ENCODE measurements at regions of chr3 and their contacts with region 1.

Region 1: DNA sequence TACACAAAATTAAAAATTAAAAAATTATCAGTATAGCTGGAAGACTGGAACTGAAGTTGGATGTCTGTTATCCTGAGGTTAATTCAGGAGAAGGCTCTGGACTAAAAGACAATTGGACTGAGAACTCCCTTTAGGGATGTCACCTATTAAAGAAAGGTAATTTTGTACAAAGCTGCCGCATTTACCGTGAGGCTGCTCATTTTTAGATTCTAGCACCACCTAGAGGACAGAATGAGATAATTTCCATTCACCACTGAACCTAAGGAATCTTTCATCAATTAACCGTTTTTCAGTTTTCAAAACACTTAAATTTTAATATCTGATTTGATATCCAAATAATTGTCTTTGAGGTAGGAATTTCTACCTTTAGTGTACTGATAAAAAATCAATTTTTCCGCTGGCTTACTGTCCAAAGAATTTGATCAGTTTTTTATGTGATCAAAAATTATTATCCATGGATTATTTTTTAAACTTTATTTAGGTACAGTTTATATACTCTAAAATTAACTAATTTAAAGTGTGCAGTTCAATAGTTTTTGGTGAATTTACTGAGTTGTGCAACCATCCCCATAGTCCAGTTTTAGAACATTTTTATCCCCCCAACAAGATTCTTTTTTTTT is 106.7 kb upstream of the TNIK start:
- DNase-seq: no peak
- ATAC-seq: peak in 1 of 2 donors; percentile 44
- H3K4me3 ChIP-seq: no peak overlapping the region
- H3K27ac ChIP-seq: no peak overlapping the region
- H3K4me1 ChIP-seq: no peaks in the 10 kb centered on the region
- H3K27me3 ChIP-seq: no peaks in the 10 kb centered on the region

Region 2: DNA sequence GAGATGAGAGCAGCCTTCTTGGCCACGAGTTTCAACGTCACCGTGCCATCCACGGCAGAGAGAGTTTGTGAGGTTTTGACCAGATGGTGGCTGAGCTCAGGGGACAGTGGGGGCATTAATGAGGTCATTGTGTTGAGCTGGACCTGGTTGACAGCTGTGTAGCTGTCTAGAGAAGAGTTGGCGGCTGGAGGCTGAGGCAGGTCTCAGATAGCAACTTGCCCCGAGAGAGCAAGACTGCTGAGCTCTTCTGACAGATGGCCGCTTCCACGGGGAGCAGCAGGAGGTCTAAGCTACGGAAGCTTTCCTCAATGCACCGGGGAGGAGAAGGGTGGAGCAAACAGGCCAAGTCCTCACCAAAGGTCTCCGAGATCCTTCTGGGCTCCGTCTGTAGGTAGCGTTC is 613.7 kb before region 1 on chr3:
- intact Hi-C with region 1: loop called in 1 of 4 experiments (anchors 5 kb)
- DNase-seq: peak in 1 of 3 donors; percentile 20
- ATAC-seq: no peak
- H3K4me3 ChIP-seq: no peak overlapping the region
- H3K27ac ChIP-seq: no peak overlapping the region
- H3K4me1 ChIP-seq: no peaks in the 10 kb centered on the region
- H3K27me3 ChIP-seq: no peaks in the 10 kb centered on the region

Region 3: DNA sequence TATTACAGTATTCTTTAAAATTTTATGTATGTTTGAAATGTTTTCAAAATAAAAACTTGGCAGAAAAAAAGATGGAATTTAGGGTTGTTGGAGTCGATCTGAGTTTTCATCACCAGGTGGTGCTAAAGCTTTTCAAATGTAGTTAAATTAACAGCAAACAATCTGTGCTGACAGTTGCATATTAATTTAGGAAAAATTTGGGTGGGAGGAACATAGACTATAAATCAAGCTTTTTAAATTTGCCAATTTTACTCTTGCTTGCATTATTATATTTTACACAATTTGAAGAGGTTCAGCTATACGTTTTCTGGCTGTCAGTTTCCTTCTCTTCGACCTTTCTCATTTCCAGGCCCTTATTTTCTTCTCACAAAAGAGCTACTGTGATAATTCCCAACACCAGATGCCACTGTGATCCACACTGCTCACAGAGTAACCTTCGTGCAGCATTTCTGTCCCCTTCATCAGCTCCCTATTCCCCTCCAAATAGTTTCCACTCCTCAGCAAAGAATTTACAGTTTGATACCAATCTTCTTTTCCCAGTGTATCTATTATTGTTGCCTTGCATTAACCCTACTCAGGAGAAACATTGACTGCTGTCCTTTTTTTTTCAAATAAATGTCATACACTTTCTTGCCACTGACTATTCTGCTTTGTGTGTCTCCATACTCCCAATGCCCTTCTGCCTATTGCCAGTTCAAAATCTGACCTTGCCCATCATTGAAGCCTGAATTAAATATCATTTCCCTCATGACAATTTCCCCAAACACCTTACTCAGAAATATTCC is 605.1 kb before region 1 on chr3:
- intact Hi-C with region 1: loop called in 3 of 4 experiments (anchors 5 kb)
- DNase-seq: no peak
- ATAC-seq: no peak
- H3K4me3 ChIP-seq: no peak overlapping the region
- H3K27ac ChIP-seq: no peak overlapping the region
- H3K4me1 ChIP-seq: no peaks in the 10 kb centered on the region
- H3K27me3 ChIP-seq: no peaks in the 10 kb centered on the region

Region 4: DNA sequence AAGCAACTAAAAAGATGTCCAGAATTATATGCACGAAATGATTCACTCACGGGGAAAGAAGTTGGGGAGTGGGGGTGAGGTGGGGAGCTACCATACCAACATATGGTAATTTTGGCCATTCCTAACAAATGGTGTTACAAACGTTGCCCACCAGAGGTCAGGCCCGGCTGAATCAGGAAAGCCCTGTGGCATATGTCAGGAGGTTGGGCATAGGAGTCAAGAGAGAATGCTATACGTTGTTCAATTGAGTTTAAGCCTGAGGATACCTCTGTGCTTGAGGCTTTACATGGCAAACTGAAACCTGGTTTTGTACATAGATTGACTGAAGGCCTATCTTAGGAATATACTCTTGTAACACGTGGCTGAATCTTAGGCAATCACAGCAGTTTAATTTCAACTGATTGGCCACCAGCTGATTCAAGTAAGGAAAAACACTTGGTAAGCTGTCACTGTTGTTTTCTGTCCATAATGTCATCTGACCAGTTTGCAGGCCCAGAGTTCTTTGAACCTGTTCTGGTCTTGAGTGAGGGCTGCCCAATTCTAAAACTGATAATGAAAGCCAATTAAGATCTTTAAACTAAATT is 517.0 kb before region 1 on chr3:
- intact Hi-C with region 1: loop called (anchors 5 to 10 kb)
- DNase-seq: peak; percentile 38 to 66 (median 54)
- ATAC-seq: peak; percentile 71 to 73
- H3K4me3 ChIP-seq: no peak overlapping the region
- H3K27ac ChIP-seq: no peak overlapping the region
- H3K4me1 ChIP-seq: no peaks in the 10 kb centered on the region
- H3K27me3 ChIP-seq: no peaks in the 10 kb centered on the region

Region 5: DNA sequence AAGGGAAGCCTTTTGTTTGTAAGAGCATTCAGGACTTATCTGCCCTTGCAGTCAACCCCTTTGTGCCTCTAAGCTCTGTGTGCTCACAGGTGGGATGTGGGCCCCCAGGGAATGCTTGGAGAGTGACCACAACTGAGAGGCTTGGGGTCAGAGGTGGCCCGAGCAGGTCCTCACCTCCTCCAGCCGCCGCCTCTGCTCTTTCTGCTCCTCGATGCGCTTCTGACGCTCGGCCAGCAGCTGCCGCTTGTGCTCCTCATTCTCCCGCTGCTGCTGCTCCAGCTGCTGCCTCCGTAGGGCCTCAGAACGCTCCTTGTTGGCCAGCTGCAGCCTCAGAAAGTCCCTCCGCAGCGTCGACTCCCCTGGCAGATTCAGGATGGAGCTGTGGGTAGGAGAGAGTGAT is 409.6 kb before region 1 on chr3:
- intact Hi-C with region 1: loop called in 1 of 4 experiments (anchors 10 kb)
- DNase-seq: peak; percentile 40 to 81 (median 73)
- ATAC-seq: peak; percentile 51 to 54
- H3K4me3 ChIP-seq: no peak overlapping the region
- H3K27ac ChIP-seq: no peak overlapping the region
- H3K4me1 ChIP-seq: no peaks in the 10 kb centered on the region
- H3K27me3 ChIP-seq: no peaks in the 10 kb centered on the region

Region 6: DNA sequence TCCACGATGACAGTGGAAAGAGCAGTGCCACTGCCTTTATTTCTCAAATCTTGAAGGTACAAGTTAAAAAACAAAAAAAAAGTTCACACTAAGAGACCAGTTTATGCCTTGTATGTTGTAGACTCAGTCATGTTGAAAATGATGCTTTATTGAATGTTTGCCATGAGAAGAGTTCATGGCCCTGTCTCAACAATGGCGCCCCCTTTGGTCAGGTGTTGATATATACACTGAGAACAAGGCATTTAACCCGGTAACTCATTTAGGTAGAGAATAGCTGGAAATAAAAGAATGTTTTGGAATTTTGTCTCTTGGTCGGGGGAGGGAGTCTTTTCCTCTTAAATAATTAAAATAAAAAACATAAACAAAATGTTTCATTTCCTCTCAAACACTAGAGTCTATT is 394.8 kb before region 1 on chr3:
- intact Hi-C with region 1: loop called in 1 of 4 experiments (anchors 10 kb)
- DNase-seq: no peak
- ATAC-seq: no peak
- H3K4me3 ChIP-seq: no peak overlapping the region
- H3K27ac ChIP-seq: no peak overlapping the region
- H3K4me1 ChIP-seq: peaks cover 7% of the 10 kb centered on the region
- H3K27me3 ChIP-seq: no peaks in the 10 kb centered on the region

Region 7: DNA sequence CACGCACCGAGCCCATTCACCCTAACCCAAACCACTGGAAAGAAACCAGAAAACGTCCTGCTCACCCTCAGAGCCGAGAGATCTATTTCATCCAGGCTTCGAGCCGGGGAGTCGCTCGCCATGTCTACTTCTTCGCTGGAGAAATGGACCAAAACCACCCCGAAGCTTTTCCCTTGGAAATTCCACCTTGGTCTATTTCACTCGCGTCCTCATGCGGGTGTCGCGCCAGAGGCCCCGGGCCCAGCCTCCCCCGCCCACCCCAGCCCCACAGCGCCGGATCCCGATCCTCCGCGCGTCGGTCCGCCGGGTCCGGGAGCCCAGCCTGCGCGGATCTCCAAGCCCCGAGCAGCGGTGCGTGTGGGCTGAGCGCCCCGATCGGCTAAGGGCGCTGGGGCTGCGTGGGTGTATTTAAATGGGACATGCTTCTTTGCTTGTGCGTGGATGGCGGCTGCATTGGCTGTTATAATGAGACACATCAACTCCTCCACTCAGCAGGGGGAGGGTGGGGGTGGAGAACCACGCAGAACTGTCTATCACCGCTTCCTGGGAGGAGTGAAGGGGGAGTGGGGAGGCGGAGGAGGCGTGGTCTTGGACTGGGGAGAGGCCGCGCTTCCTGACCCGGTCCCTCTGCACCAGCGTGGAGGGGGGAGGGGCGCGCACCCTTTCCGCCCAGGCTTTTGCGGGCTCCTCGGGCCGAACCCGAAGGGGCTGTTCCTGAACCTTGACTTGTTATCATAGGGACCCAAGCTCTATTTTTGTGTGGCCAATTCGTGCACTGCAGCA is 106.8 kb before region 1 on chr3 and contains the start of gene TNIK:
- intact Hi-C with region 1: loop called in 1 of 4 experiments (anchors 10 kb)
- DNase-seq: peak; percentile 91 to 97 (median 96)
- ATAC-seq: peak; percentile 98
- H3K4me3 ChIP-seq: peak within 1 kb of the TSS; percentile 70
- H3K27ac ChIP-seq: peak within 1 kb of the TSS; percentile 40
- H3K4me1 ChIP-seq: peaks cover 3% of the 10 kb centered on the region
- H3K27me3 ChIP-seq: no peaks in the 10 kb centered on the region
- total RNA-seq, gene TNIK: 17.1 to 27.4 (median 22.8) TPM

Measured in right cardiac atrium (tissue), 5 donors.